ENCODE measurements at regions of chr3 and their contacts with region 1.

Region 1: GRCh38 chr3:140972833-140973232 is 31.2 kb downstream of the SLC25A36 start:
- DNase-seq: no peak
- ATAC-seq: peak; percentile 42
- H3K4me3 Mint-ChIP-seq: no peak overlapping the region
- H3K27ac Mint-ChIP-seq: no peak overlapping the region
- H3K4me1 Mint-ChIP-seq: peaks cover 4% of the 10 kb centered on the region
- H3K27me3 Mint-ChIP-seq: no peaks in the 10 kb centered on the region

Region 2: DNA sequence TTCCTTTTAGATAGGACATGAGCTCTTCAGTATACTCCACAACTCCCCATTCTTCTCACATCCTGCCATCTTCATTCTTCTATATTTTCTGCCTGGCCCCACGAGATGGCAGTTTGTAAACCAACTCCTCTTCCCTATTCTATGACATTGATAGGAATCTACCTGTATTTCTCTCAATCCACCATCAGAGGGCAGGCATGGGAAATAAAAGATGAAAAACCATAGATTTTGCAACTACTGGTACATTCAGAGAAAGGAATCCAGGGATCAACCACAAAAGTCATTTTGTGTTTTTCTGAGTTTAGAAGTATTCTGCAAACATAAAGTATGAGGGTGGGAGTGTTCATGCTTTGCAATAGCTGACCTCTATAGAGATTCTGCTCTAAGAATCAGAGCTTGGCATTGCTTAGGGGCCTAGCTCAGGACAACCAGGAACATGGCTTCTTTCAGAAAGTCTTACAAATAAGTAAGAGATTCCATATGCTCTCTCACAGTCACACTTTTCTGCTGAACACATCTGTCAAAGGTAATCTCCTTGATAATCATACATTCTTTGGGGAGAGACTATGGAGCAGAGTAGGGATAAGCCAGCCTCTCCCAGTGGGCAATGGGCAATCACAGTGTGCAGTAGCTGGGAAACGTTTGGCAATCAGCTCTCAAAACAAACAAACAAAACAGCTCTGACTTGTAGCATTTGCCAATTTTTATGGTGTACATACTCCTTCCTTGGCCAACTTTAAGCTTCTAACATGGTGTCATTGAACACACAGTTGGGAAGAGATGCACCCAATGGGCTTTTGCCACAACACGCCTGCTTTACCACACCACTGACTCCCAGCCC is 74.3 kb before region 1 on chr3:
- CTCF ChIA-PET with region 1: no interaction called
- POLR2A ChIA-PET with region 1: no interaction called
- intact Hi-C with region 1: loop called (anchors 1 to 2 kb)
- DNase-seq: peak; percentile 11
- ATAC-seq: peak; percentile 66
- H3K4me3 Mint-ChIP-seq: no peak overlapping the region
- H3K27ac Mint-ChIP-seq: no peak overlapping the region
- H3K4me1 Mint-ChIP-seq: no peaks in the 10 kb centered on the region
- H3K27me3 Mint-ChIP-seq: peaks cover 11% of the 10 kb centered on the region

Region 3: DNA sequence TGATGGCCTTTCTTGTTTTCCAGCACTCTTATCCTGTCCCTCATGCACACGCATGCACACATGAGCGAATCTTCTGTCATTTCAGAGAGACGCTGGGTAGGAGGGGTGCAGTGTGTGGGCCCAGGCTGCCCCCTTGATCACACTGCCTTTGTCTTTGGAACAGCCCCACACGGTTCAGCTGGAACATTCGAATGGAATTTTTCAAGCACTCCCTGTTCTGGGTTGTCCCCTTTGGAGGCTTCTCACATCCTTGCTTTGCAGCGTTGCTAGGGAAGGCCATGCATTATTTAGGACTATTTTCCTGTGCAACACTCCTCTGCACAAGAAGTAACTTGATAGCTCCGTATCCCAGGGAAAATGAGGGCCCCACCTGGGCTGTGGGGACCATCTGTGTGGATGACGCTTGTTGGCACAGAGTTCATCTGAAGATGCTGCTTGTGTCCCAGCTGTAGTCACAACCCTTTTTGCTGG is 156.7 kb after region 1 on chr3:
- CTCF ChIA-PET with region 1: no interaction called
- POLR2A ChIA-PET with region 1: no interaction called
- intact Hi-C with region 1: no loop called
- DNase-seq: no peak
- ATAC-seq: no peak
- H3K4me3 Mint-ChIP-seq: no peak overlapping the region
- H3K27ac Mint-ChIP-seq: no peak overlapping the region
- H3K4me1 Mint-ChIP-seq: no peaks in the 10 kb centered on the region
- H3K27me3 Mint-ChIP-seq: peaks cover 2% of the 10 kb centered on the region